ENCODE measurements at regions of chr6 and their contacts with region 1.

Region 1: GRCh38 chr6:157184202-157185020 is 138.9 kb downstream of the TMEM242 start:
- DNase-seq: peak; percentile 35 to 75 (median 54)
- ATAC-seq: peak; percentile 85
- H3K4me3 ChIP-seq: no peak overlapping the region
- H3K4me3 Mint-ChIP-seq: no peak overlapping the region
- H3K27ac ChIP-seq: no peak overlapping the region
- H3K27ac Mint-ChIP-seq: no peak overlapping the region
- H3K4me1 ChIP-seq: peaks cover 16% of the 10 kb centered on the region
- H3K4me1 Mint-ChIP-seq: peaks cover 21% of the 10 kb centered on the region
- H3K27me3 ChIP-seq: no peaks in the 10 kb centered on the region
- H3K27me3 Mint-ChIP-seq: no peaks in the 10 kb centered on the region
- CTCF ChIP-seq: peak; percentile 63

Region 2: GRCh38 chr6:156378853-156379252 is 805.6 kb before region 1 on chr6:
- CTCF ChIA-PET with region 1: no interaction called
- POLR2A ChIA-PET with region 1: no interaction called
- intact Hi-C with region 1: loop called in 1 of 2 experiments (anchors 5 kb)
- DNase-seq: peak in 4 of 14 experiments; percentile 21 to 61 (median 48)
- ATAC-seq: peak; percentile 79
- H3K4me3 ChIP-seq: no peak overlapping the region
- H3K4me3 Mint-ChIP-seq: no peak overlapping the region
- H3K27ac ChIP-seq: no peak overlapping the region
- H3K27ac Mint-ChIP-seq: no peak overlapping the region
- H3K4me1 ChIP-seq: peaks cover 2% of the 10 kb centered on the region
- H3K4me1 Mint-ChIP-seq: peaks cover 14% of the 10 kb centered on the region
- H3K27me3 ChIP-seq: no peaks in the 10 kb centered on the region
- H3K27me3 Mint-ChIP-seq: no peaks in the 10 kb centered on the region
- CTCF ChIP-seq: peak; percentile 50